AG04450 (cell line): ENCODE measurements at regions of chr1 and their contacts with region 1.

Region 1: GRCh38 chr1:13748610-13749505 is 48.9 kb downstream of the PRDM2 start:
- DNase-seq: peak; percentile 82
- H3K4me3 ChIP-seq: peak overlapping the region; percentile 80
- H3K27ac ChIP-seq: peak overlapping the region; percentile 89
- H3K27me3 ChIP-seq: no peaks in the 10 kb centered on the region
- CTCF ChIP-seq: 0 out of 2 replicates have a peak, but pooled peaks have one; percentile 5

Region 2: GRCh38 chr1:13550663-13551062 is 198.2 kb before region 1 on chr1:
- CTCF ChIA-PET with region 1: no interaction called
- POLR2A ChIA-PET with region 1: no interaction called
- DNase-seq: no peak
- H3K4me3 ChIP-seq: no peak overlapping the region
- H3K27ac ChIP-seq: no peak overlapping the region
- H3K27me3 ChIP-seq: no peaks in the 10 kb centered on the region
- CTCF ChIP-seq: no peak

Region 3: DNA sequence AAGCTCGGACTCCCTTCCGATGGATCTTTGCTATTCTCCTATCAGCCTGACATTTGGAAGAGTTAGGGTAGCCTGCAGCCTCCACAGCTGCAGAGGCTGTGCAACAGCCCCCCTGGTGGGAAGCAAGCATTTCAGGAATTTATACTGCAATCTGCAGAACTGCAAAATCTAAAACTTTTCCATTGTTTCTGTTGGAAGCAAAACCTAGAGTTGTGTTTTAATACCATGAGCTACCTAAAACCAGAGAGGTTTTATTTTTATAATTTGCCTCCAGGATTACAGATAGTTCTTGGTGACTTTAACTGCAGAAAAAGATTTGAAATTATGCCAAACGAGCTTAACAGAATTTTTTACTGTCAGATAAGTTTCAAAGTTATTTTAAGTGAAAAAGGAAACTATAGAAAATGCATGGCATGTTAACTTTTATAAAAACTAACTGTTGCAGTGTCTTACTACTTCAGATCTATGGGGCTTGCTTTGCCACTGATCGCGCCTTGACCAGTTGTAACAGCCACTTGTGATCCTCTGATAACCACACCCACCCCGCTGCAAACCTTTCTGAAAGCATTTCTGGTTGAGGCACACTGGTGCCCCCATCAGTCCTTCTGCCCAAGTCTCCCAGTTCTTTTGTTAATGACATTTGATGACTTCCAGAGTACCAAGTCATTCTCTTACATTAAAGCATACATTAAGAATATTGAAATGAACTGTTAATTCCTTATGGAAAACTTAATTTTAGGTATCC is 15.9 kb after region 1 on chr1:
- CTCF ChIA-PET with region 1: interaction called, 5 read pairs
- POLR2A ChIA-PET with region 1: interaction called, 11 read pairs
- DNase-seq: no peak
- H3K4me3 ChIP-seq: peak overlapping the region; percentile 14; the same call in 1 of the 2 replicates
- H3K27ac ChIP-seq: no peak overlapping the region
- H3K27me3 ChIP-seq: no peaks in the 10 kb centered on the region
- CTCF ChIP-seq: peak; percentile 23; the same call in 1 of the 2 replicates

Region 4: GRCh38 chr1:13781907-13782644 is 33.2 kb after region 1 on chr1:
- CTCF ChIA-PET with region 1: interaction called, 3 read pairs
- POLR2A ChIA-PET with region 1: interaction called, 18 read pairs
- DNase-seq: peak; percentile 48
- H3K4me3 ChIP-seq: peak overlapping the region; percentile 8; the same call in 1 of the 2 replicates
- H3K27ac ChIP-seq: peak overlapping the region; percentile 74
- H3K27me3 ChIP-seq: no peaks in the 10 kb centered on the region
- CTCF ChIP-seq: no peak

Region 5: GRCh38 chr1:13836136-13836535 is 87.3 kb after region 1 on chr1:
- CTCF ChIA-PET with region 1: no interaction called
- POLR2A ChIA-PET with region 1: no interaction called
- DNase-seq: no peak
- H3K4me3 ChIP-seq: no peak overlapping the region
- H3K27ac ChIP-seq: no peak overlapping the region
- H3K27me3 ChIP-seq: no peaks in the 10 kb centered on the region
- CTCF ChIP-seq: no peak

Region 6: GRCh38 chr1:13992489-13993285 is 243.8 kb after region 1 on chr1:
- CTCF ChIA-PET with region 1: interaction called, 24 read pairs
- POLR2A ChIA-PET with region 1: no interaction called
- DNase-seq: no peak
- H3K4me3 ChIP-seq: no peak overlapping the region
- H3K27ac ChIP-seq: no peak overlapping the region
- H3K27me3 ChIP-seq: no peaks in the 10 kb centered on the region
- CTCF ChIP-seq: no peak

Region 7: DNA sequence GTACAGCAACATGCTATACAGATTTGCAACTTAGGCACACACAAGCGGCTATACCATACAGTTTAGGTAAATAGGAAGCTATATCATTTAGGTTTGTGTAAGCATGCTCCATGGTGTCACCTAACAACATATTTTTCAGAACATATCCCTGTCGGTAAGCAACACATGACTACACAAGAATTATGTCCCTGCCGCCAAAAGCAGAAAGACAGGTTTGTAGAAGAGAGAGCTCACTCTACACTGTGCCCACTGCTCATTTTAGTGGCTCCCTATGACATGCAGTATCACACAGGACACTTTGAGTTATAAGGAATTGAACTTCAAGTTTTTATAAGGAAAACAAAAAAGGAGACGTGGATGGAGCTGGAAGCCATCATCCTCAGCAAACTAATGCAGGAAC is 717.1 kb after region 1 on chr1:
- CTCF ChIA-PET with region 1: no interaction called
- POLR2A ChIA-PET with region 1: no interaction called
- DNase-seq: no peak
- H3K4me3 ChIP-seq: no peak overlapping the region
- H3K27ac ChIP-seq: no peak overlapping the region
- H3K27me3 ChIP-seq: no peaks in the 10 kb centered on the region
- CTCF ChIP-seq: no peak